Activated T-helper 2 cell treated with anti-CD3 and anti-CD28 coated beads, Interferon-gamma antibody, Interleukin-2, Interleukin-4, amounts not matched to agents 10 μg/mL and 5 μg/mL and 100 μg/mL, durations not matched to agents 14 hours and 24 hours and 36 hours (primary cell): ENCODE measurements at regions of chr2 and their contacts with region 1.

Region 1: DNA sequence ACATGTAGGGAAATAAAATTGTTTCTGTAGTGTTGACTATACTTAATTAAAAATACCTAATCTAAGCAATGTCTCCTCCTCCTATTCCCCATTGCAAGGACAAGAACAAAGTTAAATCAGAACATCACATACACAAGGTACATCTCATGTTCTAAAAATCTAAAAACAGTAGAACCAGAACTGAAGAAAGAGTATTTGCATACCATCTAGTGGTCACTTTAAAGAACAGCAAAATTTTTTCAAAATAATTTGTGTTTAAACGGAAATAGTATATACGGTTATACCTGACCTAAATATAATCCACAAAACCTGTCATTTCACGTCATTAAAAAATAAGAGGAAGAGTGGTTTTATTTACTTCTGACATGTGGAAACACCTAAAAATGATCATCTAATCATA is 294.3 kb upstream of the KCNH7 start:
- DNase-seq: no peak
- H3K4me3 Mint-ChIP-seq: no peak overlapping the region
- H3K27ac Mint-ChIP-seq: no peak overlapping the region
- H3K4me1 Mint-ChIP-seq: no peaks in the 10 kb centered on the region
- H3K27me3 Mint-ChIP-seq: no peaks in the 10 kb centered on the region

Region 2: GRCh38 chr2:162890690-162891311 is 242.0 kb before region 1 on chr2:
- intact Hi-C with region 1: loop called (anchors 2 kb)
- DNase-seq: no peak
- H3K4me3 Mint-ChIP-seq: no peak overlapping the region
- H3K27ac Mint-ChIP-seq: no peak overlapping the region
- H3K4me1 Mint-ChIP-seq: peaks cover 2% of the 10 kb centered on the region
- H3K27me3 Mint-ChIP-seq: no peaks in the 10 kb centered on the region

Region 3: GRCh38 chr2:163187995-163188655 is 55.3 kb after region 1 on chr2:
- intact Hi-C with region 1: loop called (anchors 2 kb)
- DNase-seq: no peak
- H3K4me3 Mint-ChIP-seq: no peak overlapping the region
- H3K27ac Mint-ChIP-seq: no peak overlapping the region
- H3K4me1 Mint-ChIP-seq: no peaks in the 10 kb centered on the region
- H3K27me3 Mint-ChIP-seq: no peaks in the 10 kb centered on the region